ENCODE measurements at regions of chr11 and their contacts with region 1.

Region 1: GRCh38 chr11:123628936-123629683 is 25.3 kb downstream of the SCN3B start:
- DNase-seq: peak; percentile 91
- H3K4me3 ChIP-seq: no peak overlapping the region
- H3K27ac ChIP-seq: peak overlapping the region; percentile 13
- H3K4me1 ChIP-seq: peaks cover 5% of the 10 kb centered on the region
- H3K27me3 ChIP-seq: no peaks in the 10 kb centered on the region
- CTCF ChIP-seq: no peak
- POLR2A ChIP-seq: no peak

Region 2: DNA sequence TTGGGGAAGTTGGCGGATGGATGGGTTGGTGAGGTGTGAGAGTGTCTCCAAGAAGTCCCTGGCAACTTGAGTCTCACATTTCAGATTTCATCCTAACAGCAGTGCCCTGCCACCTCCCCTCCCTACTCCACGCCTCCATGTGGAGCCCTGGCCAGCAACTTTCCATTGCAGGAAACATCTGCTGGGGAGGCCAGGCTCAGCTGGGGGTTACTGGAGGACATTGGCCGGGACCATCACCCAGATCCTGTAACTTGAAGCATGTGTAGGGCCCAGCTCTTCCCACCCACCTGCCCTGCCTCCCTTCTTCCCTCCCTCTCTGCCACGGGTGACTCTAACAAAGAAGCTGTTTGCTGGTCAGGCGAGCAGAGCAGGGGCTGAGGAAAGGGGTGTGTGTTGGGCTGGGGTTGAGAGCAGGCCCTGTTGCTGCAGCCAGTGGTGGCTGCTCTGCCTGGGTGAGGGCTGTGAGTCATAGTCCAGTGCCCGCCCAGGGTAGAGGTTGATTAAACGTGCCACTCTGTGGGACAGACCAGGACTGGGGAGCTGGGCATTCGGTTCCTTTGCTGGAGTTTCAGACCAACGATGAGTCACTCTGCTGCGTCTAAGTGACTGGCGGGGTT is 38.7 kb before region 1 on chr11:
- CTCF ChIA-PET with region 1: interaction called, 5 read pairs
- POLR2A ChIA-PET with region 1: no interaction called
- dilution Hi-C with region 1: no loop called
- intact Hi-C with region 1: loop called (anchors 2 kb)
- DNase-seq: peak; percentile 95
- H3K4me3 ChIP-seq: no peak overlapping the region
- H3K27ac ChIP-seq: no peak overlapping the region
- H3K4me1 ChIP-seq: peaks cover 18% of the 10 kb centered on the region
- H3K27me3 ChIP-seq: no peaks in the 10 kb centered on the region
- CTCF ChIP-seq: no peak
- POLR2A ChIP-seq: no peak

Region 3: DNA sequence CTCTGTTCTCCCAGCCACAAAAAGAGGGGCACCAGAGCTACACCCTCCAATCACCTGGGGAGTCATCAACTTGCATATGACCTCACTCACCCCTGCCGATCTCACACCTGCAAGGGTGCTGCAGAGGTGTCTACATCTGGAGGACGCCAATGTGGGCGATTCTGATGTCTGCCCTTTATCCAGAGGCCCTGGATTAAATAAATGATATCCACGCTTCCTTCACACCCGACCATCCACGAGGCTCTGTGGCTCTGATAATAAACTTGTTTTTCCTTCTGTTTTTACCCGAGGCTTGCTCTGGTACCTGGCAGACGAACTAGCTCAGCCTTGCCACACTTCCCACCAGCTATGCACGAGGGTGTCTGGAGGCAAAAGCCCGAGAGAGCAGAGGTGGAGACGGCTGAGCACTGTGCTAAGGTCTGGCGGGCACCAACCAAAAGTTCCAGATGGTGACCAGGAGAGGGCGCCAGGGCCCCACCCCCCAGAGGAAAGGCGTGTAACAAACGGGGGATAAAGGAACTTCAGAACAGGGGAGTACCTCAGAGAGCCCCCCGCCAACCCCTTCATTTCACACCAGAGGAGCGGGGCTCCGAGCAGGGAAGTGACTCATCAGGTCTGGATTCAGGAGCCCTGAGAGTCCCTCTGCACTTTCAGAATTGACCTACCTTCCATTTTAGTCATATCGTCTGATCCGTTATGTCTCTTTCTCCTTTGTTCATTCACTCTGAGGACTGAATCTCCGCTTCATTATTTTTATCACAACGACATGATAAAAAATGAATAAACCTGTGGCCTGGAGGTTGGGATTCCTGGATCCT is 11.8 kb after region 1 on chr11:
- CTCF ChIA-PET with region 1: interaction called, 15 read pairs
- POLR2A ChIA-PET with region 1: no interaction called
- dilution Hi-C with region 1: no loop called
- intact Hi-C with region 1: no loop called
- DNase-seq: peak; percentile 49
- H3K4me3 ChIP-seq: no peak overlapping the region
- H3K27ac ChIP-seq: no peak overlapping the region
- H3K4me1 ChIP-seq: no peaks in the 10 kb centered on the region
- H3K27me3 ChIP-seq: no peaks in the 10 kb centered on the region
- CTCF ChIP-seq: peak; percentile 70 to 89
- POLR2A ChIP-seq: no peak

Region 4: GRCh38 chr11:123654566-123655081 is 25.5 kb after region 1 on chr11 and contains the start of gene SCN3B:
- CTCF ChIA-PET with region 1: interaction called, 3 read pairs
- POLR2A ChIA-PET with region 1: no interaction called
- dilution Hi-C with region 1: no loop called
- intact Hi-C with region 1: loop called (anchors 1 kb)
- DNase-seq: peak; percentile 84
- H3K4me3 ChIP-seq: peak within 1 kb of the TSS; percentile 58 to 67 (median 59)
- H3K27ac ChIP-seq: no peak within 1 kb of the TSS
- H3K4me1 ChIP-seq: peaks cover 6% of the 10 kb centered on the region
- H3K27me3 ChIP-seq: peaks cover 12 to 16% of the 10 kb centered on the region in 2 experiments
- CTCF ChIP-seq: no peak
- POLR2A ChIP-seq: no peak
- total RNA-seq, gene SCN3B: 1.4 and 1.5 TPM in 2 replicates

Measured in endothelial cell of umbilical vein (primary cell).